GM12878 (cell line): ENCODE measurements at regions of chr1 and their contacts with region 1.

Region 1: GRCh38 chr1:54081306-54082270 is 28.2 kb downstream of the TCEANC2 start:
- DNase-seq: peak; percentile 23
- ATAC-seq: peak; percentile 100
- H3K4me3 ChIP-seq: no peak overlapping the region
- H3K27ac ChIP-seq: no peak overlapping the region
- H3K4me1 ChIP-seq: no peaks in the 10 kb centered on the region
- H3K27me3 ChIP-seq: no peaks in the 10 kb centered on the region
- CTCF ChIP-seq: peak; percentile 66 to 89 (median 82)
- EP300 ChIP-seq: no peak
- POLR2A ChIP-seq: no peak
- RAD21 ChIP-seq: peak; percentile 56

Region 2: DNA sequence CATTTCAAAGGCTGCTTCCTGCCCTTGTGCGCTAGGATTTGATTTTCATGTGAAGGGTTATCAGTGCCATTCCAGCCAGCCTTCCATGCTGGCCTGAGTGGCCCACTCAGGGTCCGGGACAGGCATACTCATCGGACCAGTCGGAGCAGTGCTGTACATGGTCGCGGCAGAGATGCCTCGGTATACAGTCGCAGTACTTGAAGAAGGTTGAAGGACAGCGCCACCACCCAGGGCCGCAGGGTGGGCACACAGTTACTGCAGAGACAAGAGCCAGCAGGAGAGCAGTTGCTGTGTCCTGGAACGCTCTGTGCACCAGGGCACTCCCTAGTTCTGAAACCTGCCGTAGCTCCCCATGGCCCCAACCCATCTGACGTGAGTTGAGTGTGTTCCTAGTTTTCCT is 72.7 kb before region 1 on chr1:
- CTCF ChIA-PET with region 1: no interaction called
- POLR2A ChIA-PET with region 1: no interaction called
- RAD21 ChIA-PET with region 1: no interaction called
- SMC1A ChIA-PET with region 1: no interaction called
- in situ Hi-C with region 1: no loop called
- intact Hi-C with region 1: no loop called
- DNase-seq: no peak
- ATAC-seq: no peak
- H3K4me3 ChIP-seq: no peak overlapping the region
- H3K27ac ChIP-seq: no peak overlapping the region
- H3K4me1 ChIP-seq: no peaks in the 10 kb centered on the region
- H3K27me3 ChIP-seq: no peaks in the 10 kb centered on the region; a peak in 1 of 4 replicates
- CTCF ChIP-seq: no peak
- EP300 ChIP-seq: no peak
- POLR2A ChIP-seq: no peak
- RAD21 ChIP-seq: no peak

Region 3: DNA sequence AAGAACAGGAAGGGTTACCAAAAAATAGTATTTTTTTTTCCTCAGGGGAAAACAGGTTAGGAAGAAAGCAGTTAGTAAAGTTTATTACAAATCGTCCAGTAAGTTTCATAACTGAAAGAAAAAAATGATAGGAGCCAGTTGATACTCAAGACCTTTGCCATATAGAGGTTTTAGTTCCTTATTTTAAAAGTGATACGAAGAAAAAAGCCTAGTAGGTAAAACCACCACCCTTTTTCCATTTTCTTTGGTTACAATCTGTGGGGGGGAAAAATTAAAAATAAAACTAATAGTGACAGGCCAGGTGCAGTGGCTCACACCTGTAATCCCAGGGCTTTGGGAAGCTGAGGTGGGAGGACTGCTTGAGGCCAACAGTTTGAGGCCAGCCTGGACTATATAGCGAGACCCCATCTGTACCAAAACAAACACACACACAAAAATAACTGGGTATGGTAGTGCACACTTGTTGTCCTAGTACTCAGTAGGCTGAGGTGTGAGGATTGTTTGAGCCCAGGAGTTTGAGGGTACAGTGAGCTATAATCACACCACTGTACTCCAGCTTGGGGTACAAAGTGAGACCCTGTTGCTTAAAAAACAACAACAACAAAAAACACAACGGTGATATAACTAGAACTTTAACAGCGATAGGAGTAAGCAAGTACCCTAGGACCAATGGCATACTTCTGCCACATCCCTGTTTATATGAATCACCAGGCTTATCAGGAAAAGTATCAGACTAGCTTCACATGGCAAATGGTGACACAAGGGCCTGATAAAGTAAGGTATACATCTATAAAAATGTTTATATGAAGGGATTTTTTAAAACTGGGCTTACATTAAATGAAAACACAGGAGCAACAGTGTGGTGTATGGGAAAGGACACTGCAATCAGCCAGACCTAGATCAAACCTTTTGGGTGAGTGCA is 33.9 kb before region 1 on chr1:
- CTCF ChIA-PET with region 1: interaction called, 27 read pairs
- POLR2A ChIA-PET with region 1: no interaction called
- RAD21 ChIA-PET with region 1: interaction called, 5 read pairs
- SMC1A ChIA-PET with region 1: interaction called, 7 read pairs
- in situ Hi-C with region 1: no loop called
- intact Hi-C with region 1: no loop called
- DNase-seq: no peak
- ATAC-seq: peak; percentile 67
- H3K4me3 ChIP-seq: peak overlapping the region; percentile 39; the same call in 1 of the 2 replicates
- H3K27ac ChIP-seq: peak overlapping the region; percentile 50
- H3K4me1 ChIP-seq: peaks cover 18% of the 10 kb centered on the region
- H3K27me3 ChIP-seq: no peaks in the 10 kb centered on the region
- CTCF ChIP-seq: no peak
- EP300 ChIP-seq: no peak
- POLR2A ChIP-seq: no peak
- RAD21 ChIP-seq: no peak

Region 4: DNA sequence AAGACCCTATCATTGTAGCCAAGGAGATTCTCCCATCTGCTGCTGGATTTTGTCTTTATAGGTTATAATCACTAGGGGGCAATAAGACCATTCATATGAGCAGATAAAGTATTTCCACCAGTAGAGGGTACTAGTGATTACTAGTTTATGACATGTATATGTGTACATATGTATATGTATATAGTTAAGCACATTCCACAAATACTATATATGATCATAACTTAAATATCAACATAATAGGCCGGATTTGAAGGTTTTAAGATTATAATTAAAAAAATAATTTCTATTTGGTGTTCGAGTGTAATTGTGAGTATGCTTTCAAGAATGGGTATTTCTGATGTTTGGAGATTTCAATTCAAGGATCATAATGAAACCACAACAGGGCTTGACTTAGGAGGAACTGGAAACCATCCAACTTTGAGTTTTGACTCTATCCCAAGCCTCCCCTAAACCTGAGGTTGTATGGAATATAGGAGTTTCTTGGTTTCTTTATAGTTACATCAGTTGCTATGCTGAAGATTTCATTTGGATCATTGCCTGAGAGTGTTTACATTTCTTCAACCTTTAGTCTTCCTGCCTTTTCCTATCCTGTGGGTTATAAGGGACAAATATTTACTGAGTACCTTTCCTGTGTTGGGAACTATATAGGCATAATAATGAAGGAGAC is 11.3 kb before region 1 on chr1:
- CTCF ChIA-PET with region 1: interaction called, 61 read pairs
- POLR2A ChIA-PET with region 1: interaction called, 4 read pairs
- RAD21 ChIA-PET with region 1: no interaction called
- SMC1A ChIA-PET with region 1: interaction called, 5 read pairs
- in situ Hi-C with region 1: no loop called
- intact Hi-C with region 1: no loop called
- DNase-seq: no peak
- ATAC-seq: peak; percentile 93
- H3K4me3 ChIP-seq: no peak overlapping the region
- H3K27ac ChIP-seq: no peak overlapping the region
- H3K4me1 ChIP-seq: no peaks in the 10 kb centered on the region
- H3K27me3 ChIP-seq: no peaks in the 10 kb centered on the region
- CTCF ChIP-seq: peak; percentile 59 to 97 (median 61); a peak in 4 of 6 replicates
- EP300 ChIP-seq: no peak
- POLR2A ChIP-seq: no peak
- RAD21 ChIP-seq: peak; percentile 76

Region 5: DNA sequence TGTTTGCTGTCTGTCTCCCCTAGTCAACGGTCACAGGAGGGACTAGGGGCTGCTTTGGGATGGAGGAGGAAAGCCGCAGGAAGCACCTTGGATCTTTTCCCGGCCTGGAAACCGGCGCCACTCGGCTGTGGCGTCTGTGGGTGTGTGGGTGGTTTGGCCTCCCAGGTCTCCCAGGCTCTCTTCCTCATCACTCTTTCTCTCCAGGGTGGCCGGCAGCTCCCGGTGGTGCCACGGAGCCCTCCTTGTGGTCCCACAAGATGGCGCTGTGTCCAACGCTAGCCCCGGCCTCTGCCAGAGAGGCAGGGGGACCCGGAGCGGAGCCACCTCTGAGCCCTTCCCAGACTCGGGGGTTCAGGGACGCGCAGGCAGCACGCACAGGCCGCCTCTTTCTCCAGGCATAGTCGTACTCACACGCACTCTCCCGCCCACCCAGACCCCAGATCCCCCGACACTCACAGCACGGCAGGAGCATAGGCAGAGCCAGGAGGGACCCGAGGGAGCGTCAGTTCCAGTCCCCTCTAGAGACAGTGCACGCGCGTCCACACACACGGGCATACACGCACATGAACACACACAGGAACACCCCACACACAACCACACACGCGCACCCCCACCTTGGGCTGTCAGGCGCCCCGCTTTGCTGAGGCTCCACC is 40.0 kb after region 1 on chr1:
- CTCF ChIA-PET with region 1: no interaction called
- POLR2A ChIA-PET with region 1: no interaction called
- RAD21 ChIA-PET with region 1: no interaction called
- SMC1A ChIA-PET with region 1: no interaction called
- in situ Hi-C with region 1: no loop called
- intact Hi-C with region 1: no loop called
- DNase-seq: no peak
- ATAC-seq: peak; percentile 88
- H3K4me3 ChIP-seq: no peak overlapping the region
- H3K27ac ChIP-seq: no peak overlapping the region
- H3K4me1 ChIP-seq: no peaks in the 10 kb centered on the region
- H3K27me3 ChIP-seq: no peaks in the 10 kb centered on the region; a peak in 1 of 4 replicates
- CTCF ChIP-seq: peak; percentile 46 to 64 (median 63)
- EP300 ChIP-seq: no peak
- POLR2A ChIP-seq: no peak
- RAD21 ChIP-seq: peak; percentile 74

Region 6: GRCh38 chr1:54137514-54138061 is 56.0 kb after region 1 on chr1:
- CTCF ChIA-PET with region 1: no interaction called
- POLR2A ChIA-PET with region 1: no interaction called
- RAD21 ChIA-PET with region 1: no interaction called
- SMC1A ChIA-PET with region 1: no interaction called
- in situ Hi-C with region 1: no loop called
- intact Hi-C with region 1: no loop called
- DNase-seq: no peak
- ATAC-seq: no peak
- H3K4me3 ChIP-seq: no peak overlapping the region
- H3K27ac ChIP-seq: no peak overlapping the region
- H3K4me1 ChIP-seq: no peaks in the 10 kb centered on the region
- H3K27me3 ChIP-seq: peaks cover 0 to 2% of the 10 kb centered on the region in 2 experiments; a peak in 1 of 4 replicates
- CTCF ChIP-seq: no peak
- EP300 ChIP-seq: no peak
- POLR2A ChIP-seq: no peak
- RAD21 ChIP-seq: no peak

Region 7: DNA sequence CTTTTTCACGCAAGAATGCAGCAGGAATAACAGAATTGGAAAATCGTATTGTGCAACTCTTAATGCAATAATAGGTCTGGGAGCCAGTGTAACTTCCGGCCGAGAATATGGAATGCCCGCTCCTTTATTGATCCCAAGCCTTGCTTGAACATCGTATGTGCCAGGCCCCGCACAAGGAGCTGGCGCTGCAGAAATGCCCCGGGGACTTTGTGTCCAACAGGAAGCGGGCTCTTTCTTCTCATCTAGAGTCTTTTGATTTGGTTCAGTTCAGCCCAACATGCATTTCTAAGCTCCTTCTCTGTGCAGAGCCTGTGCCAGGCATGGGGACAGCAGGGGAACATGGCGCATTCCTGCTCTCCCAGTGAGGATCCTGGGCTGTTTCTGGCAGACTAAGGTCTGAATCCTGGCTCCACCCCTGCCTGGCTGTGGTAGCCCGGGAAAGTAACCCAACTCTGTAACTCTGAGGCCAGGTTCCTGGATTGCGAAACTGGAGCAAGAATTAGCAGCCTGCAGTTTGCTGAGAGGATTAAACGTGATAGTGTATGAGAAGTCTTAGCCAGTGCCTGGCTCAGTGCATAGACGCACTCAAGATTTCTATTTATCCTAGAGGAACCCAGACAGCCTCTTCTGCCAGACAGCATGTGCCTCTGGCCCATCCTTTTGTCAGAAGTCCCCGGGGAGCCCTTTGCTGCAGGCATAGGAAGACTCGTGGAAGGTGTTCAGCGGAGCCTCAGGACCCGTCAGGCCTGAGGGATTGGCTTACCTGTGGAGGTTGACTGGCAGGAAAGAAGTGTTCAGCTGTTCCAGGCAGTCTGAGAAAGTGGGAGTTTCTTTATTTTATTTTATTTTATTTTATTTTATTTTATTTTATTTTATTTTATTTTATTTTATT is 72.2 kb after region 1 on chr1:
- CTCF ChIA-PET with region 1: no interaction called
- POLR2A ChIA-PET with region 1: no interaction called
- RAD21 ChIA-PET with region 1: no interaction called
- SMC1A ChIA-PET with region 1: no interaction called
- in situ Hi-C with region 1: no loop called
- intact Hi-C with region 1: no loop called
- DNase-seq: no peak
- ATAC-seq: no peak
- H3K4me3 ChIP-seq: no peak overlapping the region
- H3K27ac ChIP-seq: no peak overlapping the region
- H3K4me1 ChIP-seq: no peaks in the 10 kb centered on the region
- H3K27me3 ChIP-seq: no peaks in the 10 kb centered on the region
- CTCF ChIP-seq: no peak
- EP300 ChIP-seq: no peak
- POLR2A ChIP-seq: no peak
- RAD21 ChIP-seq: no peak